ENCODE measurements at regions of chr1 and their contacts with region 1.

Region 1: GRCh38 chr1:211654838-211655787 is 20.3 kb downstream of the NEK2 start:
- DNase-seq: peak; percentile 90 to 95 (median 92)
- ATAC-seq: peak; percentile 98
- H3K4me3 ChIP-seq: no peak overlapping the region
- H3K27ac ChIP-seq: no peak overlapping the region
- H3K4me1 ChIP-seq: peaks cover 5% of the 10 kb centered on the region
- H3K27me3 ChIP-seq: no peaks in the 10 kb centered on the region
- CTCF ChIP-seq: peak; percentile 87 to 94 (median 93)
- POLR2A ChIP-seq: no peak

Region 2: DNA sequence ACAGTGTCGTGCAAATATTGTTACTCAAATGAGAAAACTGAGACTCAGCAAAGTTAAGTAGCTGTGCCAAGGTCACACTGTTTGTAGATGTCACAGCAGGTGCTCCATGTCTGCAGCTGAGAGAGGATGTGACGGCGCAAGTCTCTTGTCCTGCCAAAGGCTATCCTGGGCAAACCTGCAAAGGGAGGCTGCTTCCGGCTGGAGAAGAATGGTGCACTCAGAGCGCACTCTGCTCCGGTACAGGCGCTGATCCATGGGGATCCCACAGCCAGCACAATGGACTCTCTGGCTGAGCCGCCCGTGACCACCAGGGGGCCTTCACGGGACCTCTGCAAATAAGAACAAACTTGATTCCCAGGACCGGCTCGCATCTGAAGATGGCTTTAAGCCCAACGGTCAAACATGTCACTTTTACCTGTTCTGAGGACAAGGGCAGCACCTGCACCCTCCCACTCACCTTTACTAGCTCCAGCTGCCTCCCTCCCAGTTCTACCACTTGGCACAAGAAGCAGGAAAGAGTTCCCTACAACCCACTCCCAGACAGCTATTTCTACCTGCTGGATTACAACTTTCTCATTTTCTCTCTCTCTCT is 185.1 kb before region 1 on chr1:
- intact Hi-C with region 1: loop called (anchors 5 kb)
- DNase-seq: peak; percentile 93 to 98 (median 96)
- ATAC-seq: peak; percentile 96
- H3K4me3 ChIP-seq: no peak overlapping the region
- H3K27ac ChIP-seq: peak overlapping the region; percentile 8 to 67 (median 46)
- H3K4me1 ChIP-seq: peaks cover 24% of the 10 kb centered on the region
- H3K27me3 ChIP-seq: no peaks in the 10 kb centered on the region
- CTCF ChIP-seq: peak; percentile 75 to 95 (median 90)
- POLR2A ChIP-seq: peak in 1 of 3 donors; percentile 22

Region 3: GRCh38 chr1:211520641-211521040 is 134.5 kb before region 1 on chr1:
- intact Hi-C with region 1: loop called (anchors 5 kb)
- DNase-seq: peak in 1 of 4 donors; percentile 48
- ATAC-seq: no peak
- H3K4me3 ChIP-seq: no peak overlapping the region
- H3K27ac ChIP-seq: no peak overlapping the region
- H3K4me1 ChIP-seq: peaks cover 6% of the 10 kb centered on the region
- H3K27me3 ChIP-seq: no peaks in the 10 kb centered on the region
- CTCF ChIP-seq: peak in 1 of 7 experiments; percentile 25
- POLR2A ChIP-seq: no peak

Region 4: DNA sequence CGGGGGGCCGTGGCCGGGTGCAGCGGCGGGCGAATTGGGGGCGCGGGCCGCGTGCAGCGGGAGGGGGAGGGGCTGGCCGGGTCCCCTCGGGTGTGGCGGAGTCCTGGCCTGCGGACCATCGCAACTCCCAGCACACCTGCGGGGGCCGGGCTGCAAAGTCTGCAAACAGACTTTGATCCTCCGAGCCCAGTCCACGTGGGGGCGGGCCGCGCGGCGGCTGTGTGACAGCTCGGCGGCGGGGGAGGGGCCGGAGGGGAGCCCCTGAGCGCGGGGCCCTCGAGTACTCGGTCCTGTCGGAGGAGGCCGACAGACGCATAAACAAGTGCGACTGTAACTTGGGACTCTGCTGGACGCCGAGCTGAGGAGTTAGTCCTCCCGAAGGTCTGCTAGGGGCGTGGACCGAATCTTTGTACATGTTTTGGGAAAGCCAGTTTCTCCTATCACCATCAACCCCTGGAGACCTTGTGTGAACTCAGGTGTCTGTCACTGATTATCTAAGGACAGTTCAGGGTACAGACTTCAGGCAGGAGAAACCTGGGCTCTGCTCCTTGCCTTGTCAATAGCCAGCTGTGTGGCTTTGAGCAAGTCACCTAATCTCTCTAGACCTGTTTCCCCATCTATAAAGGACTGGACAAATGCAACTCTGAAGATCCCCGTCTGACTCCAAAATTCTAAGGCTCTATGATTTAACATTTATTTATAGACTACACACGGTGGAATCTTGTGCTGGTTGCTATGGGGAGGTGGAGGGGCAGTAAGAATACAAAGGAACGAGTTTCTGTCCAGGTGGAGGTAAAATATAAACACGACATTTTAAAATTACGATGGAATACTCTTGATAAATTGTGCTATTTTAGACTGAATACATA is 75.4 kb before region 1 on chr1:
- intact Hi-C with region 1: loop called (anchors 5 kb)
- DNase-seq: peak; percentile 86 to 93 (median 88)
- ATAC-seq: peak; percentile 61
- H3K4me3 ChIP-seq: peak overlapping the region; percentile 63 to 88
- H3K27ac ChIP-seq: peak overlapping the region; percentile 90 to 97 (median 94)
- H3K4me1 ChIP-seq: peaks cover 26% of the 10 kb centered on the region
- H3K27me3 ChIP-seq: no peaks in the 10 kb centered on the region
- CTCF ChIP-seq: no peak
- POLR2A ChIP-seq: peak in 2 of 3 donors; percentile 25 to 41